Activated B cell treated with CpG ODN at 0.5 μM for 24 hours (primary cell): ENCODE measurements at regions of chr10 and their contacts with region 1.

Region 1: DNA sequence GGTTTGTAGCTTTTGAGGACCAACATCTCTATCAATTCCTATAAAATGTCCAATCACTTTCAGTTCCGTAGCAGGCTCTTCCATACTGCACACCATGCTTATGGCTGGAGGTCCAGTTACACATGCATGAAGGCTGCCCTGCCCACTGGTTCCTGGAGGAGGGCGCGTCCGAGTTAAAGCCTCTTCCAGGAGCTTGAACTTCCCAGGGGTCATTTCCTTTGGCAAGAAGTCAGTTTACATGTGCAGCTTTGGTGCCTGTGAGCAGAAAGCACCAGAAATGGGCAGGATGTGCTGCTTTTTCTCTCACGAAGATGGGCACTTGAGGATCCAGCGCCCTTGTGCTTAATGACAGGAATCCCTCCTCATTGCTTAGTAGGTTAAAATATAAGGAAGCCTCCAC is 17.6 kb upstream of the PHYH start:
- DNase-seq: no peak
- ATAC-seq: no peak
- H3K4me3 Mint-ChIP-seq: no peak overlapping the region
- H3K27ac Mint-ChIP-seq: no peak overlapping the region
- H3K4me1 Mint-ChIP-seq: no peaks in the 10 kb centered on the region
- H3K27me3 Mint-ChIP-seq: no peaks in the 10 kb centered on the region
- CTCF ChIP-seq: no peak

Region 2: GRCh38 chr10:13271552-13272163 is 45.8 kb before region 1 on chr10:
- CTCF ChIA-PET with region 1: no interaction called
- POLR2A ChIA-PET with region 1: interaction called, 10 read pairs
- intact Hi-C with region 1: no loop called
- DNase-seq: peak; percentile 28
- ATAC-seq: peak; percentile 65
- H3K4me3 Mint-ChIP-seq: peak overlapping the region; percentile 42
- H3K27ac Mint-ChIP-seq: peak overlapping the region; percentile 27
- H3K4me1 Mint-ChIP-seq: no peaks in the 10 kb centered on the region
- H3K27me3 Mint-ChIP-seq: no peaks in the 10 kb centered on the region
- CTCF ChIP-seq: no peak

Region 3: GRCh38 chr10:13291821-13292773 is 25.4 kb before region 1 on chr10:
- CTCF ChIA-PET with region 1: no interaction called
- POLR2A ChIA-PET with region 1: no interaction called
- intact Hi-C with region 1: no loop called
- DNase-seq: no peak
- ATAC-seq: no peak
- H3K4me3 Mint-ChIP-seq: no peak overlapping the region
- H3K27ac Mint-ChIP-seq: no peak overlapping the region
- H3K4me1 Mint-ChIP-seq: peaks cover 9% of the 10 kb centered on the region
- H3K27me3 Mint-ChIP-seq: no peaks in the 10 kb centered on the region
- CTCF ChIP-seq: no peak

Region 4: GRCh38 chr10:13376297-13376696 is 58.8 kb after region 1 on chr10:
- CTCF ChIA-PET with region 1: no interaction called
- POLR2A ChIA-PET with region 1: no interaction called
- intact Hi-C with region 1: no loop called
- DNase-seq: no peak
- ATAC-seq: no peak
- H3K4me3 Mint-ChIP-seq: no peak overlapping the region
- H3K27ac Mint-ChIP-seq: no peak overlapping the region
- H3K4me1 Mint-ChIP-seq: no peaks in the 10 kb centered on the region
- H3K27me3 Mint-ChIP-seq: peaks cover 22% of the 10 kb centered on the region
- CTCF ChIP-seq: no peak

Region 5: GRCh38 chr10:13450069-13450468 is 132.6 kb after region 1 on chr10:
- CTCF ChIA-PET with region 1: no interaction called
- POLR2A ChIA-PET with region 1: no interaction called
- intact Hi-C with region 1: no loop called
- DNase-seq: no peak
- ATAC-seq: no peak
- H3K4me3 Mint-ChIP-seq: no peak overlapping the region
- H3K27ac Mint-ChIP-seq: no peak overlapping the region
- H3K4me1 Mint-ChIP-seq: peaks cover 7% of the 10 kb centered on the region
- H3K27me3 Mint-ChIP-seq: peaks cover 4% of the 10 kb centered on the region
- CTCF ChIP-seq: no peak